ENCODE measurements at regions of chr10 and their contacts with region 1.

Region 1: DNA sequence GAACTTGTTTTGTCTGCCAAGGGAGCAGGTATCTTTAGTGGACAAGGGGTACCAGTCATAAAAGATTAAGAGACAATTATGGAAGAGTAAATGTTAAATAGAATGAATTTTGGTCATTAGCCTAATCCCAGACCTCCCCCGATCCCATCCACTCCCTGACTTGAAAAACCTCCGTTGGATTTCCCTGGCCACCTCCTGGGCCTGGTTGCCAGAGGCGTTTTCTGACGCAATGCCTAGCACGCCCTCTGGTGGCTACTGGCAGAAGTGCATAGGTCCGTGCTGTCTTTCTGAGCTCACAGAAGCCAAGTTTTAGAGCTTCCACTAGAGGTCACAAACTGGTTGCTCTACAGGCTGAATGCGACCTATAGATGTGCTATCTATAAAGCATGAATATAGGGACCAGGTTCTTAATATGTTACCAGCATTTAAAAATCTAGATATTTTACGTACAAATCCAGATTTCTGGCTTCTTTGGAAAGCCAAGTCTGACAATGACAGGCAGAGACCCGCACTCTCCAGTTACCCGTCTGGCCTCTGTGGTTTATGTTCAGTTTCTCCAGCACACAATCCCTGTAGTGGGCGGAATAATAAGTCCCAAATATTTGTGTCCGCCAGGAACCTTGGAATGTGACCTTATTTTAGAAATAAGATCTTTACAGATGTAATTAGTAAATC is 39.8 kb downstream of the SPOCK2 start:
- DNase-seq: peak; percentile 85 to 97 (median 93)
- ATAC-seq: peak; percentile 89 to 98 (median 94)
- H3K4me3 ChIP-seq: no peak overlapping the region
- H3K27ac ChIP-seq: no peak overlapping the region
- H3K4me1 ChIP-seq: no peaks in the 10 kb centered on the region
- H3K27me3 ChIP-seq: no peaks in the 10 kb centered on the region
- CTCF ChIP-seq: peak; percentile 96 to 100 (median 98)

Region 2: GRCh38 chr10:71899665-71900412 is 148.7 kb before region 1 on chr10:
- intact Hi-C with region 1: loop called in 2 of 3 experiments (anchors 5 kb)
- DNase-seq: no peak
- ATAC-seq: no peak
- H3K4me3 ChIP-seq: no peak overlapping the region
- H3K27ac ChIP-seq: no peak overlapping the region
- H3K4me1 ChIP-seq: no peaks in the 10 kb centered on the region
- H3K27me3 ChIP-seq: no peaks in the 10 kb centered on the region
- CTCF ChIP-seq: no peak

Region 3: GRCh38 chr10:71957546-71958275 is 90.9 kb before region 1 on chr10:
- intact Hi-C with region 1: loop called in 1 of 3 experiments (anchors 10 kb)
- DNase-seq: no peak
- ATAC-seq: no peak
- H3K4me3 ChIP-seq: no peak overlapping the region
- H3K27ac ChIP-seq: peak overlapping the region in 1 of 4 donors; percentile 23
- H3K4me1 ChIP-seq: no peaks in the 10 kb centered on the region
- H3K27me3 ChIP-seq: no peaks in the 10 kb centered on the region
- CTCF ChIP-seq: no peak

Region 4: GRCh38 chr10:72243822-72244643 is 195.4 kb after region 1 on chr10:
- intact Hi-C with region 1: no loop called
- DNase-seq: peak in 1 of 6 donors; percentile 28
- ATAC-seq: peak in 2 of 4 donors; percentile 2 to 9
- H3K4me3 ChIP-seq: no peak overlapping the region
- H3K27ac ChIP-seq: peak overlapping the region; percentile 24 to 64 (median 43)
- H3K4me1 ChIP-seq: peaks cover 35 to 52% (median 45%) of the 10 kb centered on the region in 3 donors
- H3K27me3 ChIP-seq: no peaks in the 10 kb centered on the region
- CTCF ChIP-seq: no peak

Measured in pancreas (tissue), 10 donors.